CD8-positive, alpha-beta T cell (primary cell): ENCODE measurements at regions of chr6 and their contacts with region 1.

Region 1: DNA sequence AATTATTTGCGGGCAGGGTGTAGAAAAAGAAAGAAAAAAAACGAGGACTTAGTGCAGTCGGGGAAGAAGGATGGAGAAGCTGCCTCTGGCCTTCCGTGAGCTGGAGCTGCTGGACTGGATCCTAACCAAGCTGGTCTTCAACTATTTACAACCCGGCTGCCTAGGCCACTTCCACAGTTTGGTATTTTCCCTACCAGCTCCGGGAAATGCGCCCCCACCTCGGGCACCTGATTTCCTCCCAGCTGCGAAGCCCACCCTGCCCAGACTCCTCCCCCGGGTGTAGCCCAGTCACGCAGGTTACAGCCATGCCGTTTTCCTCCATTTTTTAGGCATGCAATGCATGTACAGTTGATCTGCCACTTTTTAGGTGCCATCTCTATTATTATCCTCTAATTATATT is 21.2 kb downstream of the THEMIS start:
- DNase-seq: peak in 6 of 9 experiments; percentile 21 to 71 (median 46)
- ATAC-seq: peak; percentile 60
- H3K4me3 ChIP-seq: peak overlapping the region; percentile 19 to 24
- H3K4me3 Mint-ChIP-seq: peak overlapping the region; percentile 72
- H3K27ac ChIP-seq: peak overlapping the region in 1 of 2 experiments; percentile 40
- H3K27ac Mint-ChIP-seq: peak overlapping the region; percentile 88
- H3K4me1 ChIP-seq: peaks cover 84% of the 10 kb centered on the region
- H3K4me1 Mint-ChIP-seq: peaks cover 84% of the 10 kb centered on the region
- H3K27me3 ChIP-seq: no peaks in the 10 kb centered on the region
- H3K27me3 Mint-ChIP-seq: no peaks in the 10 kb centered on the region
- CTCF ChIP-seq: no peak

Region 2: DNA sequence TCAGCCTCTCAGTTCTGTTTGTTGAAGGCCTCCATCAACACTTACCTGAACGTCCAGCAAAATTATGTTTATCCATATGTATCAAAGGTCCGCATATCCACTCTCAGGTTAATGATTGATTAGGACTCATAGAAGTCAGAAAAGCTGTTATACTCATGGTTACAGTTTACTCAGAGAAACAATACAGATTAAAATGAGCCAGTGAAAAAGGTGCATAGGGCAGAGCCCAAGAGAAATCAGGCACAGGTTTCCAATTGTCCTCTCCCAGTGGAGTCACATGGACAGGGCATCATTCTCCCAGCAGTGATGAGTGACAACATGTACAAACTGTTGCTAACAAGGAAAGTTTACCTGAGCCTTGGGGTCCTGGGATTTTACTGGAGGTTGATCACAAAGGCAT is 15.0 kb before region 1 on chr6:
- CTCF ChIA-PET with region 1: no interaction called
- POLR2A ChIA-PET with region 1: no interaction called
- intact Hi-C with region 1: loop called in 1 of 2 experiments (anchors 1 kb)
- DNase-seq: no peak
- ATAC-seq: no peak
- H3K4me3 ChIP-seq: no peak overlapping the region
- H3K4me3 Mint-ChIP-seq: peak overlapping the region; percentile 27
- H3K27ac ChIP-seq: peak overlapping the region in 1 of 2 experiments; percentile 9
- H3K27ac Mint-ChIP-seq: peak overlapping the region; percentile 72
- H3K4me1 ChIP-seq: peaks cover 49% of the 10 kb centered on the region
- H3K4me1 Mint-ChIP-seq: peaks cover 73% of the 10 kb centered on the region
- H3K27me3 ChIP-seq: no peaks in the 10 kb centered on the region
- H3K27me3 Mint-ChIP-seq: no peaks in the 10 kb centered on the region
- CTCF ChIP-seq: no peak

Region 3: GRCh38 chr6:127893541-127893940 is 13.9 kb after region 1 on chr6:
- CTCF ChIA-PET with region 1: no interaction called
- POLR2A ChIA-PET with region 1: no interaction called
- intact Hi-C with region 1: loop called in 1 of 2 experiments (anchors 1 kb)
- DNase-seq: peak in 4 of 9 experiments; percentile 26 to 69 (median 38)
- ATAC-seq: peak; percentile 56
- H3K4me3 ChIP-seq: peak overlapping the region; percentile 24 to 79
- H3K4me3 Mint-ChIP-seq: peak overlapping the region; percentile 84
- H3K27ac ChIP-seq: peak overlapping the region; percentile 27 to 77
- H3K27ac Mint-ChIP-seq: peak overlapping the region; percentile 98
- H3K4me1 ChIP-seq: peaks cover 42% of the 10 kb centered on the region
- H3K4me1 Mint-ChIP-seq: peaks cover 58% of the 10 kb centered on the region
- H3K27me3 ChIP-seq: no peaks in the 10 kb centered on the region
- H3K27me3 Mint-ChIP-seq: no peaks in the 10 kb centered on the region
- CTCF ChIP-seq: no peak

Region 4: GRCh38 chr6:127900935-127901334 is 21.2 kb after region 1 on chr6 and contains the start of gene THEMIS:
- CTCF ChIA-PET with region 1: interaction called, 6 read pairs
- POLR2A ChIA-PET with region 1: interaction called, 4 read pairs
- intact Hi-C with region 1: loop called in 1 of 2 experiments (anchors 2 kb)
- DNase-seq: peak in 8 of 9 experiments; percentile 29 to 86 (median 64)
- ATAC-seq: peak; percentile 72
- H3K4me3 ChIP-seq: peak within 1 kb of the TSS; percentile 69 to 79
- H3K4me3 Mint-ChIP-seq: peak within 1 kb of the TSS; percentile 98
- H3K27ac ChIP-seq: peak within 1 kb of the TSS; percentile 55 to 77
- H3K27ac Mint-ChIP-seq: peak within 1 kb of the TSS; percentile 99
- H3K4me1 ChIP-seq: peaks cover 39% of the 10 kb centered on the region
- H3K4me1 Mint-ChIP-seq: peaks cover 61% of the 10 kb centered on the region
- H3K27me3 ChIP-seq: no peaks in the 10 kb centered on the region
- H3K27me3 Mint-ChIP-seq: no peaks in the 10 kb centered on the region
- CTCF ChIP-seq: no peak
- total RNA-seq, gene THEMIS: 26.3 to 29.3 TPM

Region 5: GRCh38 chr6:128000363-128000762 is 120.7 kb after region 1 on chr6:
- CTCF ChIA-PET with region 1: no interaction called
- POLR2A ChIA-PET with region 1: no interaction called
- intact Hi-C with region 1: no loop called
- DNase-seq: peak in 1 of 9 experiments; percentile 38
- ATAC-seq: peak; percentile 32
- H3K4me3 ChIP-seq: no peak overlapping the region
- H3K4me3 Mint-ChIP-seq: peak overlapping the region; percentile 26
- H3K27ac ChIP-seq: peak overlapping the region; percentile 11 to 17
- H3K27ac Mint-ChIP-seq: peak overlapping the region; percentile 88
- H3K4me1 ChIP-seq: peaks cover 55% of the 10 kb centered on the region
- H3K4me1 Mint-ChIP-seq: peaks cover 74% of the 10 kb centered on the region
- H3K27me3 ChIP-seq: no peaks in the 10 kb centered on the region
- H3K27me3 Mint-ChIP-seq: no peaks in the 10 kb centered on the region
- CTCF ChIP-seq: no peak